Posterior cingulate gyrus (tissue), 11 donors: ENCODE measurements at regions of chr17 and their contacts with region 1.

Region 1: DNA sequence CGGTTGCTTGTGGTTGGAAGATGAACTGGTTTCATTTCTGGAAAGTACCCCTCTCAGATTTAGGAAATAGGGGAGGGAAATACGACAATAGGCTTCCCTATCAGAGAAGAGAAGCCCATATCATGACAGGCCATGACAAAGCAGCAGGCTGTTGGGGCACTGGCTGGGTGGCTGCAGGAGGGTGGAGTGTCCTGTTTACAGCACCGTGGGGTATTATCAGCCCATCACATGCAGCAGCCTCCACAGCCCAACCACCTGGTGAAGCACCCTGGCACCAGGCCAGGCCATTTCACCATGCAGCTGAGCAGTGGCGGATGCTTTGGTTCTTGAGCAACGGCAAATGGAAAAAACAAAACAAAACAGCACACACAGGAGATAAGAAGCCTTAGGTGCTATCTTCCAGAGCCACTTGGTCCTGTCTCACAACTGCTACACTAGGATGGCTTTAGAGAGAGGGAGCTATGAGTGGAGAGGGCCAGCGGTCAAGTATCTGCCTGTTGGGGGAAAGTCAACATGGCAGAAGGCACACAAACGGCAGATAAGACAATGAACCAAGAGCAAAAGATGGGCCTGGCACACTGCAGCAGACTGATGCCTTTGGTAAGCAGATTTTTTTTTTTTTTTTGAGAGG is 24.2 kb downstream of the FAM117A start:
- DNase-seq: peak in 2 of 10 donors; percentile 20 to 70

Region 2: DNA sequence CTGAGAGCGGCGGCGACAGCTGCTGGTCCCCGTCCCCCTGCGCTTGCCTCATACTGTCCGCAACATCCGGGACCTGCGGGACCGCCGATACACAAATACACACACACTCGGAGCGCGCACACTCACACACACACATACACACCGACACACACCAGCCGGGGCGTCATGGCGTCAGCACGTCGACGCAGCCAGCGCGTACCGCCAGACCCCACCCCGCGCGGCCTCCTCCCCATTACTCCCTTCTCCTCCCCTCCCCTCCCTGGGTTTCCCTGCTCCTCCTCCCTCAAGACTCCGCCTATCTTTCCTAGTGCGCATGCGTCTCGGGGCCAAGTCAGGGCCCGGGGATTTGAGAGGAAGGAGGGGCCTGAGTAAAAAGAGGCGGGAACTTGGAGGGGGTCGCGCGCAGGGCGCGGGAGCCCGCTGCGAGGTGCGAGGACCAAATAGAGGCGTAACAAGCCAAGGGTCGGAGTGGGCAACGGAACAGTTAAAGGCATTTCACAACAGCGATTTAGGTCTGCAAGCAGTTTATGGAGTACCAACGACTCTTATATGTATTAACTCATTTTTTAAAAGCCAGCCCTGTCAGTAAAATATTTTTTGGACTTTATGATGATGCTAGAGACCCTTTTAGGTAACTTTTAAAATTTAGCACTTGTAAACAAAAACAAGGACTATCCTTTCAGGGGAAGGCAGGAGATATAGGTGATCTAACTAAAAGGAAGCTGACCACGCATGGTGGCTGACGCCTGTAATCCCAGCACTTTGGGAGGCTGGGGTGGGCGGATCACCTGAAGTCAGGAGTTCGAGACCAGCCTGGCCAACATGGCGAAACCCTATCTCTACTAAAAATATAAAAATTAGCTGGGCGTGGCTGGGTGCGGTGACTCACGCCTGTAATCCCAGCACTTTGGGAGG is 61.6 kb before region 1 on chr17 and contains the start of gene SPOP:
- intact Hi-C with region 1: no loop called
- DNase-seq: peak; percentile 97 to 100 (median 99)

Region 3: GRCh38 chr17:49809056-49809455 is 69.3 kb after region 1 on chr17:
- intact Hi-C with region 1: loop called (anchors 10 kb)
- DNase-seq: no peak